ENCODE measurements at regions of chr12 and their contacts with region 1.

Region 1: DNA sequence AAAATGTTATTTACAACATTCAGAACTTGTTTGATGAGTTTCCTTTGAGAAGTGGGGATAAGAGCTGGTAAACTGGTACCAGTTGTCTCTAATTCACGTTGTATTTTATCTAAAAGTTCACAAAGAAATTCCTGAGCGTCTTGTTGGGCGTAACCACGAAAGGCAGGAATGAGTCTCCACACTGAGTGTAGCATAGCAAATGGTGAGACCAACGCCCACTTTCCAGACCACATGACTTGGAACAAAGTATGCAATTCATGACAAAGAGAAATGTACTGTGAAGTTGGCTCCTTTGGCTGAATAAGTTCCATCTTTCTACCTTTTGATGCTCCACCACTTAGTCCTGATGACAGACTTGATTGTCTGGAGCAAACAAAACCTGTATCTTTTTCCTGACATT is 18.4 kb downstream of the USP44 start:
- DNase-seq: peak; percentile 53
- ATAC-seq: no peak
- H3K4me3 ChIP-seq: no peak overlapping the region
- H3K27ac ChIP-seq: peak overlapping the region; percentile 55; the same call in 1 of the 2 replicates
- H3K4me1 ChIP-seq: peaks cover 15% of the 10 kb centered on the region
- H3K27me3 ChIP-seq: no peaks in the 10 kb centered on the region
- CTCF ChIP-seq: no peak
- POLR2A ChIP-seq: no peak
- RAD21 ChIP-seq: no peak

Region 2: GRCh38 chr12:95117178-95117599 is 415.7 kb before region 1 on chr12:
- CTCF ChIA-PET with region 1: interaction called, 4 read pairs
- POLR2A ChIA-PET with region 1: no interaction called
- dilution Hi-C with region 1: no loop called
- in situ Hi-C with region 1: no loop called
- intact Hi-C with region 1: loop called (anchors 2 kb)
- DNase-seq: peak; percentile 75
- ATAC-seq: peak; percentile 72
- H3K4me3 ChIP-seq: no peak overlapping the region
- H3K27ac ChIP-seq: no peak overlapping the region
- H3K4me1 ChIP-seq: peaks cover 15% of the 10 kb centered on the region
- H3K27me3 ChIP-seq: no peaks in the 10 kb centered on the region
- CTCF ChIP-seq: peak; percentile 78
- POLR2A ChIP-seq: no peak
- RAD21 ChIP-seq: peak; percentile 80

Region 3: GRCh38 chr12:95169368-95169767 is 363.5 kb before region 1 on chr12:
- CTCF ChIA-PET with region 1: no interaction called
- POLR2A ChIA-PET with region 1: no interaction called
- dilution Hi-C with region 1: no loop called
- in situ Hi-C with region 1: no loop called
- intact Hi-C with region 1: loop called (anchors 5 kb)
- DNase-seq: peak; percentile 92
- ATAC-seq: peak; percentile 90
- H3K4me3 ChIP-seq: no peak overlapping the region
- H3K27ac ChIP-seq: no peak overlapping the region
- H3K4me1 ChIP-seq: peaks cover 4% of the 10 kb centered on the region
- H3K27me3 ChIP-seq: no peaks in the 10 kb centered on the region
- CTCF ChIP-seq: no peak
- POLR2A ChIP-seq: no peak
- RAD21 ChIP-seq: 0 out of 2 replicates have a peak, but pooled peaks have one; percentile 6

Measured in IMR-90 (cell line).